CD4-positive, alpha-beta memory T cell (primary cell): ENCODE measurements at regions of chr17 and their contacts with region 1.

Region 1: GRCh38 chr17:21551081-21551881 is 141.0 kb upstream of the KCNJ18 start:
- DNase-seq: peak; percentile 74 to 81 (median 76)
- H3K4me3 ChIP-seq: peak overlapping the region in 1 of 2 donors; percentile 73
- H3K4me3 Mint-ChIP-seq: peak overlapping the region; percentile 83 to 92 (median 88)
- H3K27ac ChIP-seq: peak overlapping the region; percentile 34
- H3K27ac Mint-ChIP-seq: peak overlapping the region in 5 of 7 donors; percentile 34 to 61 (median 50)
- H3K4me1 ChIP-seq: peaks cover 18% of the 10 kb centered on the region
- H3K4me1 Mint-ChIP-seq: peaks cover 11 to 33% (median 20%) of the 10 kb centered on the region in 4 donors
- H3K27me3 ChIP-seq: no peaks in the 10 kb centered on the region
- H3K27me3 Mint-ChIP-seq: peaks cover 13 to 17% of the 10 kb centered on the region in 2 donors

Region 2: GRCh38 chr17:20155258-20156195 is 1395.8 kb before region 1 on chr17:
- CTCF ChIA-PET with region 1: no interaction called
- POLR2A ChIA-PET with region 1: no interaction called
- intact Hi-C with region 1: loop called (anchors 10 kb)
- DNase-seq: peak; percentile 92 to 98 (median 94)
- H3K4me3 ChIP-seq: peak overlapping the region; percentile 37 to 42
- H3K4me3 Mint-ChIP-seq: no peak overlapping the region
- H3K27ac ChIP-seq: peak overlapping the region; percentile 54
- H3K27ac Mint-ChIP-seq: no peak overlapping the region
- H3K4me1 ChIP-seq: peaks cover 19% of the 10 kb centered on the region
- H3K4me1 Mint-ChIP-seq: peaks cover 3 to 8% (median 4%) of the 10 kb centered on the region in 4 donors
- H3K27me3 ChIP-seq: no peaks in the 10 kb centered on the region
- H3K27me3 Mint-ChIP-seq: no peaks in the 10 kb centered on the region